Colonic mucosa (tissue), 4 donors: ENCODE measurements at regions of chr2 and their contacts with region 1.

Region 1: GRCh38 chr2:43537137-43537536 is 58.7 kb downstream of the THADA start:
- DNase-seq: no peak
- H3K4me3 ChIP-seq: no peak overlapping the region
- H3K27ac ChIP-seq: no peak overlapping the region
- H3K4me1 ChIP-seq: no peaks in the 10 kb centered on the region
- H3K27me3 ChIP-seq: no peaks in the 10 kb centered on the region
- CTCF ChIP-seq: no peak

Region 2: GRCh38 chr2:42959234-42960001 is 577.7 kb before region 1 on chr2:
- intact Hi-C with region 1: loop called (anchors 10 kb)
- DNase-seq: no peak
- H3K4me3 ChIP-seq: no peak overlapping the region
- H3K27ac ChIP-seq: peak overlapping the region; percentile 60
- H3K4me1 ChIP-seq: peaks cover 1% of the 10 kb centered on the region
- H3K27me3 ChIP-seq: no peaks in the 10 kb centered on the region
- CTCF ChIP-seq: no peak

Region 3: DNA sequence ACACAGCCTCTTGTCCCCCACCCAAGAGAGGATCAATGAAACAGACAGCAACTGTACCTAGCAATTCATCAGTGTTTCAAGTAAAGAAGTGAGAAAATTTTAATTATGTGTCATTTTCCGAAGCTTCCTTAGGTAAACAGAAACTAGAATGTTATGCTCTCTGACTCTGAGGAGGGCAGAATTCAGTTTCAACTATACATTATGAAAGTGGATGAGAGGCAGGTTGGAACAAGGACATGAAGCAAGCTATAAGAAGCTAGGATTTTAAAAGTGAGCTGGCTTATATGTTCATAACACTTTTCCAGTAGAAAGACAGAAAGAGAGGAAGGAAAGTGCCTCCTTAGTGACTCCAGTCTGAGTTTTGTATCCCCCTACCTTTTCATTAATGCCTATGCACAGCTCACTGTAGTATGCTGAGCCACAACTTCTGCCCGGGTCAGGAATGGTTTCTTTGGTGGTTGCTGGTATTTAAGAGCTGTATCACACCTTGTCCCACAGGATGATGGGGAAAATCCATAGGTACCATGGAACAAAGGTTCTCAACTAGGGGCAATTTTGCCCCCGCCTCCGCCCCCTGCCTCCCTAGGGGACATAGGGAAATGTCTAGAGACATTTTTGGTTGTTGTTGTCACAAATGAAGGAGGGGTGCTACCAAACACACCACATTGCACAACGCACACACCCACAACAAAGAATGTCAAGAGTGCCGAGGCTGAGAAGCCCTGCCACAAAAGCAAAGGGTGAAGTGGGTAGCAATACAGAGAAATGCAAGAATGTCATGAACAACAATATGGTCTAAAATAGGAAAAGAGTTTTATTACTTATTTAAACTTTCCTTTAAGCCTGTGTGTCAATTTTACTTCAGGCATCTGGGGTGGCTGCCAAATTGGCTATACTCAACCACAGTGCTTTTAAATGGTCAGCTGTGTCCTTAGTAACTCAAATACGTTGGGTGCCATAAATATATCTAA is 149.8 kb before region 1 on chr2:
- intact Hi-C with region 1: no loop called
- DNase-seq: no peak
- H3K4me3 ChIP-seq: no peak overlapping the region
- H3K27ac ChIP-seq: peak overlapping the region; percentile 28
- H3K4me1 ChIP-seq: no peaks in the 10 kb centered on the region
- H3K27me3 ChIP-seq: no peaks in the 10 kb centered on the region
- CTCF ChIP-seq: no peak